Heart right ventricle (tissue), 16 donors: ENCODE measurements at regions of chr1 and their contacts with region 1.

Region 1: DNA sequence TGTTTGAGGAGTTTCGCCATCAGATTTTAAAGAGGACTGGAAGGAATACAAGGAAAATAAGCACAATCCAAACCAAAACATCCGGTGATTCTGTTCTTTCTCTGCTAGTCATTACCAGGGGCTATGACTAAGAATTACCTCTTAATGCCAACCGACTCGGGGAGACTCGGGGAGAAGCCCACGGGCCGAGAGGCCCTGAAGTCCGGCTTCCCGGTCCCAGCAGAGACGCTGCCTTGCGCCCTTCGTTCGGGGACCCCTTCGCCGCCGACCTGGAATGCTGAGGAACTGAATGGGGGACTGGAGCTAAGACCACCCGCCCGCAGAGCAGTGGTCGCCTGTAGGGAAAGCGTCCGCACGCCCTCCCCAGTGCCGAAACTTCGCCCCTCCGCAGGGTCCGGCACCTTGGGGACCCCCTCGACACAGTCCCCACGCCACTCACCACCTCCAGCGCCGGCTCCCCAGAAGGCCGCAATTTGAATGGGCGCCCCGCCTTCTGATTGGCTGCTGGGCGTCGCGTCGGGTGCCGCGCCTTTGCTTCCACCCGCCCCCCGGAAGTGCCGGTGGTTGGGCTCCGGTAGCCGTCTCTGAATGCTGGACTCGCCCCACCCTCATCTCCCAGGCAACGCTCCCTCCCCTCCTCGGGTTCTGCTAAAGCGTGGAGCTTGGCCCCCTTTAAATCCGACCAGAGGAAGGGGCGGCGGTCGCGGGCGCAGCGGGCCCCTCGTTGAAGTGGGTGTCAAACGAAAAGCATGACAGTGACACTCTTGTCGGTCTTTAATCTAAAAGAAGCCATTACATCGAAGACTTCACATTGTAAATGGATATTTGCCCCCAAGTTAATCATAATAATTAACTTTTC is at the start of gene KIF14:
- DNase-seq: peak; percentile 91
- ATAC-seq: peak; percentile 98 to 100 (median 99)
- H3K4me3 ChIP-seq: peak within 1 kb of the TSS; percentile 50 to 79 (median 67)
- H3K27ac ChIP-seq: peak within 1 kb of the TSS in 6 of 10 donors; percentile 5 to 82 (median 35)
- H3K4me1 ChIP-seq: peaks cover 0 to 37% (median 11%) of the 10 kb centered on the region in 9 donors
- H3K27me3 ChIP-seq: no peaks in the 10 kb centered on the region
- CTCF ChIP-seq: no peak
- total RNA-seq, gene KIF14: 0.02 to 1.3 (median 0.06) TPM in 8 of 10 donors, not detected in the others

Region 2: DNA sequence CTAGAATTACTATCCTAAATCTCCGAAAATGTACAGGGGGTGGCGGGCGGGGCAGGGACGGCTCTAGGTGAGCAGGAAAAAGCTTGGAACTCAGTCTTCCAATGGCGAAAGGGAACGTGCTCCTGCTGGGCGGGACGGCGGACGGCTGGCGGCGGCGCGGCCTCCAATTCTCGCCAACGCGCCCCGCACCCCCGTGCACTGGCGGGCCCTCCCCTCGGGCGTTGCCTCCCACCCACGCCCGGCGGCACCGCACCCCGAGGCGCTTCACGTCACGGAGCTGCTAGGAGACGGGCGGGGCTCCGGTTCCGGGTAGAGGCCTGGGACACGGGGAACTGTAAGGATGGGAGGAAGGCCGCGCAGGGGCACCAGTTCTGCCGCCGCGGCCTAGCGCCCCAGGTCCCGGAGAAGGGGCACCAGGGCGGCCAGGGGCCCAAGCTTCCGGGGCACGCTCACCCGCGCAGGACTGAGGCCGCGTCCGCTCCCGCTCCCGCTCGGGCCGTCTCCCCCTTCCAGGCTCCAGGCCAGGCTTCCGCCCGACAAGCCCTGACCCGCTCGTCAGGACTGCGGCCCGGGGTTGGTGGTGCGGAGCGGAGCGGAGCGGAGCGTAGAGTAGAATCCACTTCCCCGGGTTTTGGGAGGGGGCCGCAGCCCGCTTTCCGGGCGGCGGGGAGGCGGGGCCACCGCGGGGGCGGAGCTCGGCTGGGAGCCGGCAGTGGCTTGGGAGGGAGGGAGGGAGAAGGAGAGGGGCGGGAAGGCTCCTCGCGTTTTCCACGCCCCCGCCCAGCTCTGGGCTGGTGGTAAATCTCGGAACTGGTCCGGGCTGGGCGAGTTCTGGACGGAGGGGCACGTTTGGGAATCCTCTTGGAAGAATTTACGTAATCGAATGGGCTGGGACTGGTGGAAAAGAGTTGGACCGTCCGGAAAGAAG is 49.1 kb after region 1 on chr1 and contains the start of gene DDX59:
- intact Hi-C with region 1: loop called in 2 of 10 experiments (anchors 1 to 5 kb)
- DNase-seq: peak; percentile 95 to 97
- ATAC-seq: peak; percentile 93 to 98 (median 96)
- H3K4me3 ChIP-seq: peak within 1 kb of the TSS; percentile 71 to 98 (median 88)
- H3K27ac ChIP-seq: peak within 1 kb of the TSS; percentile 98 to 100 (median 100)
- H3K4me1 ChIP-seq: peaks cover 4 to 49% (median 28%) of the 10 kb centered on the region in 9 donors
- H3K27me3 ChIP-seq: no peaks in the 10 kb centered on the region
- CTCF ChIP-seq: peak in 1 of 9 donors; percentile 12
- total RNA-seq, gene DDX59: 13.5 to 16.7 (median 14.5) TPM

Region 3: GRCh38 chr1:200738740-200739498 is 118.4 kb after region 1 on chr1 and contains the start of gene CAMSAP2:
- intact Hi-C with region 1: loop called in 3 of 10 experiments (anchors 2 to 5 kb)
- DNase-seq: peak; percentile 91 to 92
- ATAC-seq: peak; percentile 91 to 97 (median 93)
- H3K4me3 ChIP-seq: peak within 1 kb of the TSS; percentile 69 to 98 (median 90)
- H3K27ac ChIP-seq: peak within 1 kb of the TSS; percentile 97 to 100 (median 100)
- H3K4me1 ChIP-seq: peaks cover 5 to 47% (median 36%) of the 10 kb centered on the region in 9 donors
- H3K27me3 ChIP-seq: peaks cover 0 to 39% (median 0%) of the 10 kb centered on the region in 7 donors
- CTCF ChIP-seq: no peak
- total RNA-seq, gene CAMSAP2: 36.4 to 47.1 (median 38.1) TPM

Region 4: GRCh38 chr1:200802865-200803512 is 182.5 kb after region 1 on chr1:
- intact Hi-C with region 1: loop called (anchors 1 to 10 kb)
- DNase-seq: peak; percentile 50 to 79
- ATAC-seq: peak; percentile 67 to 91 (median 87)
- H3K4me3 ChIP-seq: no peak overlapping the region
- H3K27ac ChIP-seq: no peak overlapping the region
- H3K4me1 ChIP-seq: peaks cover 0 to 19% (median 9%) of the 10 kb centered on the region in 9 donors
- H3K27me3 ChIP-seq: no peaks in the 10 kb centered on the region
- CTCF ChIP-seq: peak; percentile 79 to 97 (median 92)

Region 5: DNA sequence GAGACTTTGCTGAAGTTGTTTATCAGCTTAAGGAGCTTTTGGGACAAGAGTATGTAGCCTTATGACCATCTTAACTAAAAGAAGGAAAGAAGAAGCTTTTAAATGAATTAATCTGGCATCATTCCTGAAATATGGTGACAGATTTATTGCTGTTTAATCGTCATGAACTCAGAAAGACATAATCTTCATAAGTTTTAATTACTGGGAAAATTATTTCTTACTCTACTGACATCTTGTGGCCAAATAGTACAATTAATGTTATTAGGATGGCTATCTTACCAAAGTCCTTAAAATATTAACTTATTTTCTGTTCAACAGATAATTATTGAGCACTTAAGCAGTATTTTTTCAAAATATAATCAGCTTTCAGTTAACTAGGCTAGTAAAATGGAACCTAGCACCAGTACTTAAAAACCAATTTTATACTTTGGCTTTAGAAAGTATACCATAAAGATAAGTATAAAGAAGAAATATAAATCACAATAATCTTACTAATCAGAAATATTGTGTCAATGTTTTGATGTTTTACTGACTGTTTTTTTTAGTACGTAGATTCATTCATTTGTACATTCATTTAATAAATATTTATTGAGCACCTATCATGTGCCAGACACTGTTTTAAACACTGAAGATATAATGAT is 217.5 kb after region 1 on chr1:
- intact Hi-C with region 1: loop called in 7 of 10 experiments (anchors 2 to 10 kb)
- DNase-seq: no peak
- ATAC-seq: no peak
- H3K4me3 ChIP-seq: no peak overlapping the region
- H3K27ac ChIP-seq: no peak overlapping the region
- H3K4me1 ChIP-seq: peaks cover 0 to 5% (median 0%) of the 10 kb centered on the region in 9 donors
- H3K27me3 ChIP-seq: no peaks in the 10 kb centered on the region
- CTCF ChIP-seq: peak in 8 of 9 donors; percentile 38 to 68 (median 57)

Region 6: DNA sequence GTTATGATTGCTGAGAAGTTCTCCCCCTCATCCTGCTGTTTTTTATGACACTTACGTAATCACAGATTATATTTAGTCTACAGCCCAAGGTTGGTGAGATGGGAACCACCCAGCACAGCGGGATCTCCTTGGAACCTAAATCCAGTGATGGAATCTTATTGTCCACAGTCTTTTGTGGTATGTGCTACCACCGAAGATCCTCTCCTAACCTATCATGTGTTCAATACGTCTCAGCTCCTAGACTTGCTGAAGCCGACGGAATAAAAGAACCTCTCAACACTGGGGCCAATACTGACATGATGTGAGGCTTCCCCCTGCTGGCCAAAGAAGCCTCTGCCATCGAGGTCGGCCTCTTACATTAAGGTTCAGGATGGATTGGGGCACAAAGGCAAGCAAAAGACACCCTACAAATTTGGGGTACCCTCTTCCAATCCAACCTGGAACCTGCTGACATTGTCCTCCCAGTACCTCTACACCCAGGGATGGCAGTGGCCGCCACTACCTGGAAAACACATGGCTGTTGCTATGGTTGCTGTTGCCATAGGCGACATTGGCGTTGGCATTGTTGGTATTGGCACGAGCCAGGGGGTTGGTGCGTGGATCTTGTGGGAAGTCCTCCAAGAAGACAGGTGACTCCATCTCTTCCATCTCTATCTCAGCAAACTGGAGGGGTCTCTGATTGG is 422.4 kb after region 1 on chr1:
- intact Hi-C with region 1: loop called in 4 of 10 experiments (anchors 5 to 10 kb)
- DNase-seq: peak; percentile 38 to 55
- ATAC-seq: peak; percentile 66 to 86 (median 82)
- H3K4me3 ChIP-seq: no peak overlapping the region
- H3K27ac ChIP-seq: no peak overlapping the region
- H3K4me1 ChIP-seq: peaks cover 0 to 9% (median 4%) of the 10 kb centered on the region in 9 donors
- H3K27me3 ChIP-seq: peaks cover 0 to 15% (median 8%) of the 10 kb centered on the region in 7 donors
- CTCF ChIP-seq: peak; percentile 56 to 89 (median 86)

Region 7: DNA sequence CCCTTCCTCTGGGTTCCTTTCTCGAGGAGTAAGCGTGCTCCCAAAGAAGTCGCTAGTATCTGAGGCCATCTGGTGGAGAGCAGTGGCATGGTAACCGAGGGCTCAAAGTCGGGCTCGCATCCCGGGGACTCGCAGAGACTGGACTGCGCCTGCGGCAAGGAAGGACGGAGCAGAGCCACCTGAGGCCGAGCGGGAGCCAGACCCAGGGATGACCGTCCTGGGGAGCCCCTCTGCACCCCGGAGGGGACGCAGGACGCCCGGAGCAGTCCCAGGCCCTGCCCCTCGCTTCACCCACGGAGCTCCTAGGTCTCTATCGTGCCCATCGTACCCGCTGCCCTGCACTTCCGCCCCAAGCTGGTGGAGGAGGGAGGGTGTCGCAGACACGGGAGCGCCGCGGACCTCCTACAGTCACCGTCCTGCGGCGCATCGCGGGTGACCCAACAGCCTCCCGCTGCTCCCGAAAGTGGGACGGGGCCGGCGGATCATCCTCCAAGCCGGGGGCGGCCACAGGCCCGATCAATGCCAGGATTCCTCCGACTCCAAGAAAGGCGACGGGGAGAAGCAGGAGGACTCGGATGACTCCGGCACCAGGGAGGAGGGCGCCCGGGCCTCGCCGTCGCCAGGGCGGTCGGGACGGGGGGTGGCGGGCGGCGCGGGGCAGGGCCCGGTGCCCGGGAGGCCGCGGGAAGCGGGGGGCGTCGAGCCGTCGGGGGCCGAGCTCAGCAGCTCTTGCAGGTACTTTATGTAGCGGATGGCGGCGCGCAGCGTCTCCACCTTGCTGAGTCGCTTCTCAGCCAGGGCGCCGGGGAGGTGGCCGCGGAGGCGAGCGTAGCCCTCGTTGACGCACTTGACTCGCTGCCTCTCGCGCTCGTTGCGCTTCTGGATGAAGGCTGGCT is 494.0 kb after region 1 on chr1:
- intact Hi-C with region 1: loop called in 1 of 10 experiments (anchors 10 kb)
- DNase-seq: peak; percentile 79 to 82
- ATAC-seq: peak; percentile 88 to 96 (median 93)
- H3K4me3 ChIP-seq: peak overlapping the region; percentile 39 to 65 (median 57)
- H3K27ac ChIP-seq: peak overlapping the region in 1 of 10 donors; percentile 26
- H3K4me1 ChIP-seq: peaks cover 0 to 16% (median 8%) of the 10 kb centered on the region in 9 donors
- H3K27me3 ChIP-seq: peaks cover 0 to 60% (median 46%) of the 10 kb centered on the region in 7 donors
- CTCF ChIP-seq: peak; percentile 62 to 89 (median 80)